Activated T-helper 1 cell treated with anti-CD3 and anti-CD28 coated beads, Interleukin-12 subunit alpha, Interleukin-12 subunit beta, Interleukin-2, Interleukin-4 antibody, amounts not matched to agents 30 ng/mL and 10 ng/mL and 1 ng/mL, durations not matched to agents 14 hours and 24 hours and 36 hours (primary cell): ENCODE measurements at regions of chr1 and their contacts with region 1.

Region 1: DNA sequence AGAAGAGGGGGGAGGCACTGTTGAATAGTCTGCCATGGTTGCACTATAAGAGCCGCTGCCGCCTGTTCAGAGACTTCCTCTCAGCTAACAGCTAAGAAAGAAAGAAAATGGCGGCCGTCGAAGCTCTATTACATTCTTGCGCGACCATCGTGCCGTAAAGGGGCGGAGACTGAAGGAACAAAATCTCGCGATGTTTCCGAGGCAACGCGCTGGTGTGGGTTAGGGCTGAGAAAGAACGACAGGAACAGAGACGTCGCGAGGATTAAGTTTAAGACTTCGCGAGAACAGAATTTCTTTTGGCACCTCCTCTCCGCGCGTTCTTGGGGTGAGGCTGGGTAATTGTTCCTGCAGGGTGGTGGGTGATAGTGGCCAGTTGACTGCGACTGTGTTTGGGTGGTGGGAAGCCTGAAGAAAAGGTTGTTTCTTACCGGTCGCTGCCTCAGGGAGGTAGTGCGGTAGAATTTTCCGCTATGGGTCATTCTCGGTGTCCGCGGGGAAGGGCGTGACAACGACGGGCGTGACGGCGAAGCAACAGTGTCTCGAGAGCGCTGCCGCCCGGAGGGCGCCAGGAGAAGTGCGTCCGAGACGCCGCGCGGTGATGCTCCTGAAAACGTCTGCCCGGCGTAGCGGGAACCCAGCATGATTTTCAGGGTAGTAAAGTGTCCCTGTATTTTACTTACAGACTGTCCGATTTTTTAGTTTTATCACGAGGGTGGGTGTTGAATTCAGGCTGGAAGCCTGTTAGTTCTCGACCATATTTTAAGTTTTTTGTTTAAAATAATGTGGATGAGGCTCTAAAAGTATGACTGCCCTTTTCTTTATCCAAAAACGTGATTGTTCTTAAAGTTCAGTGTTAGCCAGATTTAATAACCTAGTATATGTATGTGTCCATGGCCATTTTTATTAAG is at the start of gene FUBP1:
- DNase-seq: peak; percentile 96
- H3K4me3 Mint-ChIP-seq: no peak within 1 kb of the TSS
- H3K27ac Mint-ChIP-seq: no peak within 1 kb of the TSS
- H3K4me1 Mint-ChIP-seq: peaks cover 52% of the 10 kb centered on the region
- H3K27me3 Mint-ChIP-seq: no peaks in the 10 kb centered on the region
- total RNA-seq, gene FUBP1: 268 and 278 TPM in 2 replicates

Region 2: DNA sequence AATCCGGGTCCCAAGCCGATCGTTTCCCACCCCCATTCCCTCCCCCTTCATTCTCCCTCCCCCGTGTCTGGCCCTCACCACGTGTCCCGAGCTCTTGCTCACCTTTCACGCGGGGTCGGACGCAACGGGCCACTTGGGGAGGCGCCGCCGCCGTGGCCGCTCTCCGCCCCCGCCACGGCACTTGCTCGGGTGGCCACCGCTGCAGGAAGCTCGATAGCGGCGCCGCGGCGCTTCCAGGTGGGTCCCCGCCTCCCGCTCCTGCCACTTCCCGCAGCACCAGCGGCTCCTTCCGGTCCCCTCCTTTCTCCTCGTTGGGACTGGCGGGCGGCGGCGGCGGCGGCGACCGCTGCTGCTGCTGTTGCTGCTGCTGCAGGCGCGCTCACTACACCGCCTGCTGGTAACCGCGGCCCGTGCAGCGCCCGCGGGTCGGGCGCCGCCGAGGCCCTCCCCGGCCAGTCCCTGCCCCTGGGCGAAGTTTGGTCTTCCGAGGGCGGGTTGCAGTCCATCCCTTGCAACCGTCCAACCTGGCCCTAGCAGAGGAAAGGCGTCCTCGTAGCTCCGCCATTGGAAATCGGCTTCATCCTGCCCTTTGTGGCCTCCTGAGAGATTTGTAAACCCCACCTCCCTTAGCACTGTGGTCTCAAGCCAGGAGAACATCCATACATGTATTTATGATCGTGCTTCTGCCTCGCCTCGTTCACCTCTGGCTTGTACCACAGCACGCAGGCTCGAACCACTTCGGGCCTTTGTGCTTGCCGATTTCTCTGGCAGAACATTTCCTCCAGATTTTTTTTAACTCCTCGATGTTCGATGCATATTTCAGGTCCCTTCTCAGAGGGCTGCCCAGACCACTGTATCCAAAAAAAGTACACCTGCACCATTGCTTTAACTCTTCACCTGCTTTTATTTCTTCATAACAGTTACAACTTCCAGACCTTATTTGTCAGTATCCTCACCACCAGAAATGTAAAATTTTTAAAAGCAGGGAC is 295.8 kb before region 1 on chr1:
- intact Hi-C with region 1: loop called (anchors 1 kb)
- DNase-seq: peak; percentile 90
- H3K4me3 Mint-ChIP-seq: peak overlapping the region; percentile 96
- H3K27ac Mint-ChIP-seq: peak overlapping the region; percentile 95
- H3K4me1 Mint-ChIP-seq: peaks cover 29% of the 10 kb centered on the region
- H3K27me3 Mint-ChIP-seq: no peaks in the 10 kb centered on the region

Region 3: GRCh38 chr1:77779529-77780281 is 199.5 kb before region 1 on chr1 and contains the start of gene MIGA1:
- intact Hi-C with region 1: loop called (anchors 1 kb)
- DNase-seq: peak; percentile 77
- H3K4me3 Mint-ChIP-seq: peak within 1 kb of the TSS; percentile 98
- H3K27ac Mint-ChIP-seq: peak within 1 kb of the TSS; percentile 87
- H3K4me1 Mint-ChIP-seq: peaks cover 39% of the 10 kb centered on the region
- H3K27me3 Mint-ChIP-seq: peaks cover 4% of the 10 kb centered on the region
- total RNA-seq, gene MIGA1: 8.0 and 8.6 TPM in 2 replicates

Region 4: DNA sequence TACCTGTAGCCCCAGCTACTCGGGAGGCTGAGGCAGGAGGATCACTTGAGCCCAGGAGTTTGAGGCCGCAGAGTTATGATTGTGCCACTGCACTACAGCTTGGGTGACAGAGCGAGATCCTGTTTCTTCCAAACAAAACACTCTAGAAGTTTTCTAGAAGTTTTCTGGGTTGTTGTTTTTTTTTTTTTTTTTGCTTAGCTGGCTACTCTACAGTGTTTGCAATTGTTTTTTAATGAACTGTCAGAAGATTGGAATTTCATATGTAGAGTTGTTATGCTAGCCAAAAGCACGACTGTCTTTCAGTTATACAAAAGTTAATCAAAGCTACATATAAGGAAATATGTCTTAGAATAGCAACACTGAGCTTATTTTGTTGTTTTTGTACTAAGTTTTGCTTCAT is 121.7 kb before region 1 on chr1:
- intact Hi-C with region 1: no loop called
- DNase-seq: no peak
- H3K4me3 Mint-ChIP-seq: no peak overlapping the region
- H3K27ac Mint-ChIP-seq: no peak overlapping the region
- H3K4me1 Mint-ChIP-seq: no peaks in the 10 kb centered on the region
- H3K27me3 Mint-ChIP-seq: no peaks in the 10 kb centered on the region

Region 5: GRCh38 chr1:77961392-77961791 is 17.8 kb before region 1 on chr1:
- intact Hi-C with region 1: loop called (anchors 1 kb)
- DNase-seq: no peak
- H3K4me3 Mint-ChIP-seq: no peak overlapping the region
- H3K27ac Mint-ChIP-seq: peak overlapping the region; percentile 18
- H3K4me1 Mint-ChIP-seq: peaks cover 17% of the 10 kb centered on the region
- H3K27me3 Mint-ChIP-seq: no peaks in the 10 kb centered on the region

Region 6: GRCh38 chr1:78004719-78005447 is 25.7 kb after region 1 on chr1 and contains the start of gene DNAJB4:
- intact Hi-C with region 1: loop called (anchors 1 kb)
- DNase-seq: peak; percentile 69
- H3K4me3 Mint-ChIP-seq: peak within 1 kb of the TSS; percentile 90
- H3K27ac Mint-ChIP-seq: peak within 1 kb of the TSS; percentile 98
- H3K4me1 Mint-ChIP-seq: peaks cover 54% of the 10 kb centered on the region
- H3K27me3 Mint-ChIP-seq: peaks cover 3% of the 10 kb centered on the region
- total RNA-seq, gene DNAJB4: 10.2 and 10.3 TPM in 2 replicates

Region 7: DNA sequence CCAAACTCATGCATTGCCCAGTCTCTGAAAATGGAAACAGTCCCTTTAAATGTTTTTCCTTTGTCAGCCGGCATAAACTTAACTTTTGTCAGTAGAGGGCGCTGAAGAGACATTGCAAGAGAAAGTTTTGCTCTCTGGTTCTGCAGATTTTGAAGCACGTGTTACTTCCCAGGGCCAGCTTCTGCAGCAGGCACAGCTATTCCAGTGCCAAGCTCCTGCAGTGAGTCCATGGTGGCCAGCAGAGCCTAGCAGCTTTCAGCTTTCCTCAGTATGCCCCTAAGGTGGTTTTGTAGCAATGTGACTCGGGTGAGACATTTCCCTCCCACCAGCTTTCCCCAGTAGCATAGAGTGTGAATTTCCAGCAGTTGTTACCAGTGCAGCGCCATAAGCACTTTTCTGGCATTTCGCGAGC is 638.4 kb after region 1 on chr1:
- intact Hi-C with region 1: loop called (anchors 5 kb)
- DNase-seq: peak; percentile 53
- H3K4me3 Mint-ChIP-seq: peak overlapping the region; percentile 51
- H3K27ac Mint-ChIP-seq: peak overlapping the region; percentile 30
- H3K4me1 Mint-ChIP-seq: peaks cover 42% of the 10 kb centered on the region
- H3K27me3 Mint-ChIP-seq: peaks cover 13% of the 10 kb centered on the region